MCF 10A (cell line): ENCODE measurements at regions of chr6 and their contacts with region 1.

Region 1: DNA sequence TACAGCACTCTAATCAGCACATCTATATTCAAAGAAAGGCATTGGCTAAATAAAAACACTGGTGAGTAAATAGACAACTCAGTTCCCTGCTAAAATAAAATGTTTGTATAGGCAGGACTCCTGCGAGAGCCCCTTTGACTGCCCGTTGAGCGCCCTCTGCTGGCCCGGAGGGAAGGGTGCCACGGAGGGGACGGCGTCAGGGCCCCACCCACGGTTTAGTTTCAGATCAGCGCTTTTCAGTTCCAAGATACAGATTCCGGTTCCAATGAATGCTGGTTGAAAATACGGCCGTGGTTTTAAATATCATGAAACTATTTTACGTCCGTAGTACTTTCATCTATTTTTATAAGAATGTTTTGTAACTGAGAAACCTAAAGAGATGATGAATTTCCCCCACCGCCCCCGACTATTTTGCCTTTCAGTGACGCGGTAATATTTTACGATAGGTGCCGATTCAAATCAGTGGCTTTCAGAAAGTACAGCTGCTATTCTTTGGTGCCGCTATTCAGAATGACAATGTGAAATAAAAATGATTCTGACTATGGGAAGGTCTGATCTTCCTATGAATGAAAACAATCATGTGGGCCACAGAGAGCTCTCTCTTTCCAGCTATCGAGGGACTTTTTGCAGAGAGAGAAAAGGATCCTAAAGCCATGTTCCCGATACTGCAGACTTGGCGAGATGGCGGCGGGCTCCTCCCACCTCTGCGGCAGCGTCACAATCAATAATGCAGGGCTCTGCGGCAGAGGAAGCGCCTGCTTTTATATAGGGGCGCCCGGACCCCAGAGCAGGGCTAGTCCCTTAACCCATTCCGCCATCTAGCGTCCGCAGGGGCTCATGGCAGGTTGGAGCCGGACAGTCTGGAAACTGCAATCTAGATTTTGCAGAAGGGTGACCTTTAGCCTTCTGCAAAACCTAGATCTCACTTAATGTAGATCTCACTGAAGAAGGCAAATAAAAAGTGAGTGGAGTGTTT is 10.6 kb upstream of the CCN6 start:
- DNase-seq: peak; percentile 80
- H3K4me3 Mint-ChIP-seq: peak overlapping the region; percentile 81
- H3K27ac Mint-ChIP-seq: peak overlapping the region; percentile 42
- H3K4me1 Mint-ChIP-seq: no peaks in the 10 kb centered on the region
- H3K27me3 Mint-ChIP-seq: no peaks in the 10 kb centered on the region
- CTCF ChIP-seq: peak; percentile 95

Region 2: GRCh38 chr6:111259089-111259831 is 784.1 kb before region 1 on chr6:
- CTCF ChIA-PET with region 1: interaction called, 6 read pairs
- POLR2A ChIA-PET with region 1: no interaction called
- intact Hi-C with region 1: loop called (anchors 1 kb)
- DNase-seq: peak; percentile 99
- H3K4me3 Mint-ChIP-seq: peak overlapping the region; percentile 73
- H3K27ac Mint-ChIP-seq: peak overlapping the region; percentile 79
- H3K4me1 Mint-ChIP-seq: peaks cover 23% of the 10 kb centered on the region
- H3K27me3 Mint-ChIP-seq: peaks cover 9% of the 10 kb centered on the region
- CTCF ChIP-seq: peak; percentile 93

Region 3: GRCh38 chr6:111605100-111605751 is 438.1 kb before region 1 on chr6:
- CTCF ChIA-PET with region 1: interaction called, 3 read pairs
- POLR2A ChIA-PET with region 1: no interaction called
- intact Hi-C with region 1: loop called (anchors 1 kb)
- DNase-seq: peak; percentile 88
- H3K4me3 Mint-ChIP-seq: peak overlapping the region; percentile 90
- H3K27ac Mint-ChIP-seq: peak overlapping the region; percentile 72
- H3K4me1 Mint-ChIP-seq: peaks cover 40% of the 10 kb centered on the region
- H3K27me3 Mint-ChIP-seq: no peaks in the 10 kb centered on the region
- CTCF ChIP-seq: no peak

Region 4: DNA sequence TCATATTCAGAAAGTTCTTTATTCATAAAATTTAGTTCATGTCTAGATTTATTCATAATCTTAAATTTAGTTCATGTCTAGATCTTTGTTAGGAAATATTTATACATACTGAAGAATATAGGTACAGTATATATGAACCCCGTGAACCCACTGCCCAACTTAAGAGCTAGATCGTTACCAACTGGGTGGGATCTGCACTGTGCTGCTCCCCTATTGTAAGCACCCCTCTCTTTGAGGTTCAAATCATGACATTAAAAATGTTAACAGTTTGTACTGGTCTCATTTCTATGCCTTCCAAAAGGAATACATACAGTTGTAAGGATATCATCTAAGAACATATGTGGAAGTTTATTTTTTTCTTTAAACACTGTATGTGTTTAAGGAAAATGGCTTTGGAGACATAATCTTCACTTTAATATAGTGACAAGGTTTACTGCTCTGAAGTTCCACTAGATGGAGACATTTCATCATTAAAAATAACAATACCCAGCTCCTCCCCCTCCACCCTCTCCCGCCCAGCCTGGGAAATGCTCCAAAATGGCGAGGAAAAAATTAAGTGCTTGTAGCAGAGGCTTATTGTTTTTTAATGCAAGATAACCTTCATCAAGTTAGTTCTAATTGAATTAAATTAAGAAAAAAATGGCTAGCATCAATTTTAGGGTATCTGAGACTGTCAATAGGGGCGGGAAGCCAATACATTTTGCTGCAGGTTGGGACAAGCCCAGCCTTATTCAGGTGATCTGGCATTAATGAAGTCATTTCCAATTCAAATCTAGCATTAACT is 333.5 kb before region 1 on chr6:
- CTCF ChIA-PET with region 1: interaction called, 136 read pairs
- POLR2A ChIA-PET with region 1: interaction called, 8 read pairs
- intact Hi-C with region 1: loop called (anchors 1 kb)
- DNase-seq: peak; percentile 69
- H3K4me3 Mint-ChIP-seq: peak overlapping the region; percentile 28
- H3K27ac Mint-ChIP-seq: no peak overlapping the region
- H3K4me1 Mint-ChIP-seq: peaks cover 7% of the 10 kb centered on the region
- H3K27me3 Mint-ChIP-seq: no peaks in the 10 kb centered on the region
- CTCF ChIP-seq: peak; percentile 56

Region 5: DNA sequence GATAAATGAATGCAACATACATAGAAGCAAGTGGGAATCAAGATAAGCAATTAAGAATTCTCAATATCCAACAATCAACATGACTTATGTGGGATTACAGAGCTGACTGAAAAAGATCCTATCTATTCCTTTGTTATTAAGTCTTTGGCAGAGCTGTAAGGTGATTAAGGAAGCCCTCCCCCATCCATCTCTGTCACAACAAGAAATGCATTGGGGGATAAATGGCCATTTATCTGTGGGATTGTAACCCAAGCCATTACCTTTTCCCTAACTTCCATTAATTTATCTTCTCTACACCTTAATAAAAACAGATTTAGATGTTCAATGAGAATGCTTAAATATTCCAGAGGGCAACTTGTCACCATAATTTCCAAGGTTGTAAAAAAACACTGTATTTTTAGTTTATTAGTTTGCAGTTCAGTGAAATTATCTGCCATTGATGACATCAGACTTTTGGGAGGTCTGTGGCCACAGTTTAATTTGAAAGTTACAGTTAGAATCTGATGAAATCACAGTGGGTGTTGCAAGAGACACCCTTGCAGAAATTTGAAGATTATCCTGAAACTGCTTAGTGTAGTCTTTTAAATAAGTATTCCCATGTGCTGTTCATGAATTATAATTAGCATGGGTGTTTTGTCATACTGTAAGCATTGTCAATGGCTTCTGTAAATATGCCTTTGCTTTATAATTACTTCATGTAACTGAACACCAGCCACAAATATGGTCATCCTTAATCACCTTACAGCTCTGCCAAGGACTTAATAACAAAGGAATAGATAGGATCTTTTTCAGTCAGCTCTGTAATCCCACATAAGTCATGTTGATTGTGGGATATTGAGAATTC is 120.6 kb before region 1 on chr6:
- CTCF ChIA-PET with region 1: no interaction called
- POLR2A ChIA-PET with region 1: no interaction called
- intact Hi-C with region 1: no loop called
- DNase-seq: peak; percentile 52
- H3K4me3 Mint-ChIP-seq: no peak overlapping the region
- H3K27ac Mint-ChIP-seq: no peak overlapping the region
- H3K4me1 Mint-ChIP-seq: peaks cover 9% of the 10 kb centered on the region
- H3K27me3 Mint-ChIP-seq: no peaks in the 10 kb centered on the region
- CTCF ChIP-seq: no peak

Region 6: GRCh38 chr6:111997078-111997852 is 46.1 kb before region 1 on chr6:
- CTCF ChIA-PET with region 1: interaction called, 23 read pairs
- POLR2A ChIA-PET with region 1: interaction called, 4 read pairs
- intact Hi-C with region 1: loop called (anchors 1 kb)
- DNase-seq: peak; percentile 76
- H3K4me3 Mint-ChIP-seq: no peak overlapping the region
- H3K27ac Mint-ChIP-seq: no peak overlapping the region
- H3K4me1 Mint-ChIP-seq: peaks cover 12% of the 10 kb centered on the region
- H3K27me3 Mint-ChIP-seq: no peaks in the 10 kb centered on the region
- CTCF ChIP-seq: peak; percentile 85

Region 7: DNA sequence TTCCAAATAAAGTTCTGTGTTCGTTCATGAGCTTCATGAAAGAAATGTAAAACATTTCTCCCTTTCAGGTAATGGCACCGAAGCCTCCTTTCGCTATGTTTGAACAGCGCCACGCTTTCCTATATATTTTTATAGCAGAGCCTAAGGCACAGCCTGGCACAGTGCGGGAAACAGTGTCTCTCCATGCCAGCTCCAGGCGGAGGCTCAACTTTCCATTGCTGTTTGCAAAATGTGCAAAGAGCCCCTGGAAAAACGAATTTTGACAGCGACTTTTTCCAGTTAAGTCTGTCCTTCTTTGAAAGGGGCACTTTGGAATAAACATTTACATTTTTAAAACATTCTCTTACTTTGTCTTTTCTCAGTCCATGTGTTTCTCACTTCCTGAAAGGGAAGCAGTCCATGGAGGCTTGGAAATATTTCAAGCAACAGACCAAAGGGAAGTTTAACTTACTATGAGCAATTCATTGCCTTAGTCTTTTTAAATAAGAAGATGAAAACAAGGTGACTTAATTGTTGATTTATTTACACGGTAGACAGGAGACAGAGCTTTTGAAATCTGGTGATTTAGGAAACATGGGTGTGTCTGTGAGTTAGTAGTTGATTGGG is 11.3 kb after region 1 on chr6:
- CTCF ChIA-PET with region 1: interaction called, 29 read pairs
- POLR2A ChIA-PET with region 1: no interaction called
- intact Hi-C with region 1: no loop called
- DNase-seq: no peak
- H3K4me3 Mint-ChIP-seq: no peak overlapping the region
- H3K27ac Mint-ChIP-seq: no peak overlapping the region
- H3K4me1 Mint-ChIP-seq: no peaks in the 10 kb centered on the region
- H3K27me3 Mint-ChIP-seq: no peaks in the 10 kb centered on the region
- CTCF ChIP-seq: no peak

Region 8: GRCh38 chr6:112701201-112701600 is 657.9 kb after region 1 on chr6:
- CTCF ChIA-PET with region 1: no interaction called
- POLR2A ChIA-PET with region 1: no interaction called
- intact Hi-C with region 1: no loop called
- DNase-seq: peak; percentile 64
- H3K4me3 Mint-ChIP-seq: no peak overlapping the region
- H3K27ac Mint-ChIP-seq: no peak overlapping the region
- H3K4me1 Mint-ChIP-seq: no peaks in the 10 kb centered on the region
- H3K27me3 Mint-ChIP-seq: no peaks in the 10 kb centered on the region
- CTCF ChIP-seq: no peak